Activated CD8-positive, alpha-beta T cell treated with anti-CD3 and anti-CD28 coated beads for 36 hours (primary cell): ENCODE measurements at regions of chr1 and their contacts with region 1.

Region 1: DNA sequence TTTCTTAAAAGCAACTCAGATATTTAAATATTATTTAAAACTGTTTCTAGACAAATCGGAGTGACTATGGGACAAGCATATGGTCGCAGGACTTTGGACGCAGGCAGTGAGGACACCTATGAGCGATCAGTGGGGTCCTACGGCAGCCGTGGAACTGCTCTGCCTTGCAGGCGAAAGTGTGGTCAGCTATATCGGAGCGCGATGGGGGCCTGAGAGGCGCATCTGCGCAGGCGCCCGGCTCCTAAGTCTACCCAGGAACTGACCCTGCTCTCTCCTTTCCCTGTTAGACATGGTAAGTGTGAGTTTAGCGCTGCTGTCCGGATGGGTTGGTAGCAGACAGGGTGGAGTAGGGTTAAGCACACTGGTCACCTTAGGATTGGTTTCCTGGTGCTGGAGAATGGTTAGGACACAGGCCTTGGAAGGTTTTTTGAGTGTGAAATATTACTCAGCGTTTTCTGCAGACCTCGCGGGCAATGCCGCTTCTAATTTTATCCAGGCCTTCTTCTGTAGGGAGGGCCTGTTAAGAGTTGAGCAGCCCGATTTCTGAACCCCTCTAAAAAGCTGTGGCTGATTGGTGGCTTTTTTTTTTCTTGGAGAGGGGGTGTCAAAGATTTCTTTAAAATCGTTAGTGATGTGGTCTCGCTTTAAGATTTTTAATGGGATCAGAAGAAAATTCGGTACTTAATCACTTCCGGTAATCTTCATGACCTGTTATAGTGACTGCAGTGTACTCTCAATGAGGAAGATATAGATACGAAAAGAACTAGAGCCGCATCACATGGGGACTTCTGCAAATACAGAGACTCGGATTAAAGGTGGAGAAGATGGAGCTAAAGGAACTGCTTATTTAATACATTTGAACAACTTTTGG is at the start of gene RABGGTB:
- DNase-seq: peak; percentile 95
- ATAC-seq: peak; percentile 99
- H3K4me3 Mint-ChIP-seq: peak within 1 kb of the TSS; percentile 88
- H3K27ac Mint-ChIP-seq: peak within 1 kb of the TSS; percentile 99
- H3K4me1 Mint-ChIP-seq: peaks cover 31% of the 10 kb centered on the region
- H3K27me3 Mint-ChIP-seq: no peaks in the 10 kb centered on the region
- CTCF ChIP-seq: no peak
- total RNA-seq, gene RABGGTB: 170 to 173 TPM

Region 2: GRCh38 chr1:75724472-75725022 is 61.7 kb before region 1 on chr1 and contains the start of gene ACADM:
- CTCF ChIA-PET with region 1: no interaction called
- POLR2A ChIA-PET with region 1: interaction called, 8 read pairs
- intact Hi-C with region 1: loop called (anchors 1 kb)
- DNase-seq: peak; percentile 88
- ATAC-seq: peak; percentile 93
- H3K4me3 Mint-ChIP-seq: peak within 1 kb of the TSS; percentile 100
- H3K27ac Mint-ChIP-seq: peak within 1 kb of the TSS; percentile 99
- H3K4me1 Mint-ChIP-seq: peaks cover 42% of the 10 kb centered on the region
- H3K27me3 Mint-ChIP-seq: no peaks in the 10 kb centered on the region
- CTCF ChIP-seq: no peak
- total RNA-seq, gene ACADM: 47.5 to 49.8 TPM

Region 3: GRCh38 chr1:75768016-75768415 is 18.2 kb before region 1 on chr1:
- CTCF ChIA-PET with region 1: no interaction called
- POLR2A ChIA-PET with region 1: interaction called, 10 read pairs
- intact Hi-C with region 1: no loop called
- DNase-seq: no peak
- ATAC-seq: no peak
- H3K4me3 Mint-ChIP-seq: no peak overlapping the region
- H3K27ac Mint-ChIP-seq: no peak overlapping the region
- H3K4me1 Mint-ChIP-seq: no peaks in the 10 kb centered on the region
- H3K27me3 Mint-ChIP-seq: no peaks in the 10 kb centered on the region
- CTCF ChIP-seq: no peak

Region 4: DNA sequence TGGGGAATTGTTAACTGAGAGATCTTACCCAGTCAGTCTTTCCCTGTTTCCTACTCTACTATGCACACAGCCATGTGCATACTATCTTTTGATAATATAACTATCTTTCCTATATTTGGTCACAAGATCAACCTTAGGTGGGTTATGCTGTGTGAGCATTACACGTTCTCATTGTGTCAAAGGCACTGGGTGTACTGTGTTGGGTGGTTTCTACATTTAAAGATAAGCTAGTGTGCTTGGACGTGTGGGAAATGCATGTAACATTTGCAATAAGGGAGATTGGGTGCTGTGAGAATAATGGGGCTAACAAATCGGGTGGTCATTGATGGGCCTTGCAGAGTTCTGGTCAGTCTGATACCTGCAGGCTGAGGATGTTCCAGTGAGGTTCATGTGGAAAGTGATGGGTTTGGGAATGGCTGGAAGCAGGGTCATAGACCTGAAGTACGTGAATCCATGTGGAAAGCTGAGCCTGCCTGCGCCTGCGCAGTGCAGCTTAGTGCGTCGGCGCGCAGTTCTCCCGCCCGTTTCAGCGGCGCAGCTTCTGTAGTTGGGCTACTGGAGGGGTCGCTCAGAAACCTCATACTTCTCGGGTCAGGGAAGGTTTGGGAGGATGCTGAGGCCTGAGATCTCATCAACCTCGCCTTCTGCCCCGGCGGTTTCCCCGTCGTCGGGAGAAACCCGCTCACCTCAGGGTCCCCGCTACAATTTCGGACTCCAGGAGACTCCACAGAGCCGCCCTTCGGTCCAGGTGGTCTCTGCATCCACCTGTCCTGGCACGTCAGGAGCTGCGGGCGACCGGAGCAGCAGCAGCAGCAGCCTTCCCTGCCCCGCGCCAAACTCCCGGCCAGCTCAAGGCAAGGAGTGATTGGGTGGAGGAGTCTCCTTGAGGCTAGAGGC is 10.4 kb after region 1 on chr1 and contains the start of gene MSH4:
- CTCF ChIA-PET with region 1: no interaction called
- POLR2A ChIA-PET with region 1: interaction called, 52 read pairs
- intact Hi-C with region 1: no loop called
- DNase-seq: no peak
- ATAC-seq: peak; percentile 37
- H3K4me3 Mint-ChIP-seq: peak within 1 kb of the TSS; percentile 3
- H3K27ac Mint-ChIP-seq: peak within 1 kb of the TSS; percentile 35
- H3K4me1 Mint-ChIP-seq: peaks cover 17% of the 10 kb centered on the region
- H3K27me3 Mint-ChIP-seq: no peaks in the 10 kb centered on the region
- CTCF ChIP-seq: no peak
- total RNA-seq, gene MSH4: 0.16 to 0.32 TPM